Activated T-helper 2 cell treated with anti-CD3 and anti-CD28 coated beads, Interferon-gamma antibody, Interleukin-2, Interleukin-4, amounts not matched to agents 10 μg/mL and 5 μg/mL and 100 μg/mL, durations not matched to agents 14 hours and 24 hours and 36 hours (primary cell): ENCODE measurements at regions of chr17 and their contacts with region 1.

Region 1: GRCh38 chr17:42266918-42267778 is 9.0 kb downstream of the STAT5B start:
- DNase-seq: no peak
- H3K4me3 Mint-ChIP-seq: peak overlapping the region; percentile 58
- H3K27ac Mint-ChIP-seq: peak overlapping the region; percentile 96
- H3K4me1 Mint-ChIP-seq: peaks cover 52% of the 10 kb centered on the region
- H3K27me3 Mint-ChIP-seq: no peaks in the 10 kb centered on the region

Region 2: DNA sequence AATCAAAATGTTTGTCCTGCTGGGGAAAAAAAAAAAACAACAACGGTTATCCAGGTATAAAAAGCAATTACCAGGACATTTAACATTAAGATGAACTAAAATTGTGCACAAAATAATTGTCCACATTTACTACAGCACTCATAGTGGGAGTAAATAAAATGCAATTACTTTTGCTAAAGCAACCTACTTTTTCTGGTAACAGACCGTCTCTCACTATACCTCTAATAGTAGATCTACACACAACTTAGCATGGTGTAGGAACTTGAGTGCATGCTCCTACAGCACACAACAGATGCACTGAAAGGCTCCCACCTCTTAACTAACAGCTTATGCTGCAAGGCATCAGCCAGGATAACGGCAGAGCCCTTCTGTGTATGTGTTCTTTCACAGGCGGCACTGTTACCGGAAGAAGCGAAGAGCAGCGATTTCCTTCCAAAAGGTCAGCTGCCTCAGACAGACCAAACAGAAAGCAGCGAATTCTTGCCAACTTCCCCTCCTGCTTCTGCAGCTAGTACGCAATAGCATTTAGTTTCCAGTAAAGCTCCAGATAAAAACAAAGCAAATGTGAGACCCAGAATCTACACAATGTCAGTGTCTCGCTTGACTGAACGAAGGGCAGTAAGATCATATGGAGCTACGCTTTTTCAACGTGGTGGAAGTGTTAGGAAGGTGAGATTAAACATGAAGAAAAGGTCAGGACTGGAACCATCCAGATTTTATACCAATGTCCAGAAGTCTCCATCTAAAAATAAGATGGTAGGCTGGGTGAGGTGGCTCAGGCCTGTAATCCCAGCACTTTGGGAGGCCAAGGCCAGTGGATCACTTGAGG is 18.6 kb before region 1 on chr17:
- intact Hi-C with region 1: loop called (anchors 1 kb)
- DNase-seq: peak; percentile 74
- H3K4me3 Mint-ChIP-seq: peak overlapping the region; percentile 80
- H3K27ac Mint-ChIP-seq: peak overlapping the region; percentile 95
- H3K4me1 Mint-ChIP-seq: peaks cover 56% of the 10 kb centered on the region
- H3K27me3 Mint-ChIP-seq: no peaks in the 10 kb centered on the region

Region 3: DNA sequence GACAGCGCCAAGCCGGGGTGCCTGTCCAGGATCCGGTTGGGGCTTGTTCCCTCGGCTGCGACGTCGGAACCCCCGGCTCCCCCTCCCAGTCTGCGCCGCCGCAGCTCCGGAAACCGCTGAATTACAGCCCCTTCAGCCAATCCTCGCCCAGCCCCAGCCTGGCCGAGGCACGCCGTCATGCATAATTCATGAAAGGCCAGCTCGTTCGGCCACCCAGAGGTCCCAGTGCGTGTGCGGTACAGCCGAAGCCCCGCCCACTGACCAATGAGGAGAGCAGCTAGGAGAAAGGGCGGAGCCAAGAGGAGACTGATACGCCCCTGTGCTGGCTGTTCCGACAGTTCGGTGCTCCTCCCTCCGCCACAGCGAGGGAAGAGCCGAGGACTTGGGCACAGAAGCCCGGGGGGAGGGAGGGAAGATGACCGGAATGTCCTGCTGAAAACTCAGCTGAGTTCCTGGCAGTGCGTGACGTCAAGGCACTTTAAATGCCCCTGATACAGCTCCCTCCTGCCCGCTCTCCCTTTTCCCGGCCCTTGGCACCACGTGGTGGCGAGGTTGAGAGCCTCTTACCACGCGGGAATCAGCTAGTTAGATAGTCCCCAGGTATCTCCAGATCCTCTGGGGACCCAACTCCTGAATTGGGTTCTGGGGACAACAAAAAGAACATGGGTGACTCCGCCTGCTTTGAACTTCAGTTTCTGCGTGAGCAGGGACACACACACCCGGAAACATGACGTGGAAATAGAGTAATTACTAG is 121.4 kb after region 1 on chr17 and contains the start of gene STAT3:
- intact Hi-C with region 1: loop called (anchors 2 kb)
- DNase-seq: peak; percentile 100
- H3K4me3 Mint-ChIP-seq: peak within 1 kb of the TSS; percentile 91
- H3K27ac Mint-ChIP-seq: peak within 1 kb of the TSS; percentile 100
- H3K4me1 Mint-ChIP-seq: peaks cover 39% of the 10 kb centered on the region
- H3K27me3 Mint-ChIP-seq: no peaks in the 10 kb centered on the region
- total RNA-seq, gene STAT3: 250 and 262 TPM in 2 replicates